Gastrocnemius medialis (tissue), 4 donors: ENCODE measurements at regions of chrX and their contacts with region 1.

Region 1: DNA sequence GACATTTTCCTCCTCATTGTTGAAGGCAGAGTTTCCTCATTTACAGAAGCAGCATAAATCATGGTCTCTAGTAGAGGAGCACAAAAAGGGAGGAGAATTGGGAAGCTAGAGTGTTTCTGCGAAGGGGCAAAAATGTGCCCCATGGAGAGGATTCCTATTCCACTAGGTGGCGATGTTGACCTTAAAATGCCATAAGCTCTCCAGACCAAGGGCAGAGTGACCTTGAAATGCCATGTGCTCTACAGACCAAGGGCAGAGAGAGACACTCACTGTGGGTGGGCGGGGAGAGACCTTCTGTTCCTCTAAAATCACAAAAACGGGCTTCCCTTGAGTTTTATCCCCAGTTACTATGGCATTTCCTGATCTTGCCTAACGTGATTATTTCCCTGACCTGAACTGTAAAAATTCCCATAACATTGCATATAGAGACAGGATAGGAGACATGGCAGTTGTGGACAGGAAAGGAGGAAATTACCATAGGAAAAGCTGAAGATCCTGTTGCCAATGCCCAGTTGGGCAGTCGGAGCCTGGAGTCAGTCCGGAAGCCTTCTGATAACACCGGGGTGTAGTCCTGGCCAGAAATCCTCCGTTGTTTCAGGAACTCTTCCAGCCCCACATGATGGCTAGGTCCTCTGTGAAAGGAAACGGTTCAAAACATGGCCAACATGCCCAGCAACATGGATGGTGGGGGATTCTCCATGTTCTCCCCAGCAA is 567.7 kb downstream of the MAGEB5 start:
- DNase-seq: no peak
- ATAC-seq: no peak
- H3K4me3 ChIP-seq: no peak overlapping the region
- H3K27ac ChIP-seq: no peak overlapping the region
- H3K4me1 ChIP-seq: no peaks in the 10 kb centered on the region
- H3K27me3 ChIP-seq: no peaks in the 10 kb centered on the region
- CTCF ChIP-seq: no peak
- POLR2A ChIP-seq: no peak

Region 2: DNA sequence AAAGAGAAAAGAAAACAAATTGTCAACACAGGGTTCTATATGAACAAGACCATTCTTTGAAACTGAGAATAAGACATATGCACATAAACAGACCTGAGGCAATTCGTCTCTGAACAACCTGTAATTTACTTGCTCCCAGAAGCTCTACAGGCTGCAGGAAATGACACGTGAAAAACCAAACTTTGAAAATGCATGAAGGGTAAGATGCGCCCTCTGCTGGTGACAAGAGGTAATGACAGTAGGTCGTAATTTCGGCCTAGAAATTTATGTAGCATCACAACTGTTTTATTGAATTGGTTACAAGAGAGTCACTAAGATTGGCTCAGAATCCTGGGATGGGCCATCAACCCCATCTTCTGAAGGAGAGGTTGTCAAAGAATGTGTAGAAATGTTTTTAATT is 403.0 kb after region 1 on chrX:
- in situ Hi-C with region 1: loop called in 1 of 4 experiments (anchors 25 kb)
- intact Hi-C with region 1: no loop called
- DNase-seq: no peak
- ATAC-seq: no peak
- H3K4me3 ChIP-seq: no peak overlapping the region
- H3K27ac ChIP-seq: no peak overlapping the region
- H3K4me1 ChIP-seq: no peaks in the 10 kb centered on the region
- H3K27me3 ChIP-seq: no peaks in the 10 kb centered on the region
- CTCF ChIP-seq: peak in 3 of 5 experiments; percentile 39 to 67 (median 39)
- POLR2A ChIP-seq: no peak

Region 3: DNA sequence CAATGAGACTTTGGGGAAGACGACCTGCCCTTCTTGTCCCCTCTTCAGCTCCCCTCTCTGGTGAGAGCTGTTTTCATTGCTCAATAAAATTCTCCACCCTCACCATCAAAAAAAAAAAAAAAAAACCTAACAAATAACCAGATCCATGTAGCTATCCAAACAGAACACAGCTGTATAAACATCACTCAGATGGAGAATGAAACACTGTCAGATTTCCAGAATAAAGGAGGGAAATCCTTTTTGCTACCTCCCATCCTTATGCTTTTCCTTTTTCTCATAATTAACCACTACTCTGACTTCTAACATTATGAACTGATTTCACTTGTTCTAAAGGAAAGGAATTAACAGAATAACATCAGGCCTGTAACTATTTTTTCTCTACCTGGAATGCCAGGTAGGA is 523.9 kb after region 1 on chrX:
- in situ Hi-C with region 1: no loop called
- intact Hi-C with region 1: no loop called
- DNase-seq: no peak
- ATAC-seq: no peak
- H3K4me3 ChIP-seq: no peak overlapping the region
- H3K27ac ChIP-seq: no peak overlapping the region
- H3K4me1 ChIP-seq: no peaks in the 10 kb centered on the region
- H3K27me3 ChIP-seq: no peaks in the 10 kb centered on the region
- CTCF ChIP-seq: no peak
- POLR2A ChIP-seq: no peak

Region 4: DNA sequence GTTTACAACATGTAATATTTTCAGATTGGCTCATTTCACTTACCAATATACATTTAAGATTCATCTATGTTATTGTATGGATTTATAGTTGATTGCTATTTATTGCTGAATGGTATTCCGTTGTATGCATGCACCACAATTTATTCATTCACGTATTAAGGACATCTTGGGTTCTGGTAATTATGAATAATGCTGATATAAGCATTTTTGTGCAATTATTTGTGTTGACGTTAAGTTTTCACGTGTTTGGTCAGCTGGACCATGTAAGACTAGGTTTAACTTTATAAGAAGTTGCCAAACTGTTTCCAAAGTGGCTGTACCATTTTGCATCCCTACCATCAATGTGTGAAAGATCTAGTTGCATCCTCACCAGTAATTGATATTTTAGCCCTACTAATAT is 1059.2 kb after region 1 on chrX:
- in situ Hi-C with region 1: no loop called
- intact Hi-C with region 1: no loop called
- DNase-seq: no peak
- ATAC-seq: no peak
- H3K4me3 ChIP-seq: no peak overlapping the region
- H3K27ac ChIP-seq: no peak overlapping the region
- H3K4me1 ChIP-seq: no peaks in the 10 kb centered on the region
- H3K27me3 ChIP-seq: no peaks in the 10 kb centered on the region
- CTCF ChIP-seq: no peak
- POLR2A ChIP-seq: no peak